Sciatic nerve (tissue), 2 donors: ENCODE measurements at regions of chr16 and their contacts with region 1.

Region 1: DNA sequence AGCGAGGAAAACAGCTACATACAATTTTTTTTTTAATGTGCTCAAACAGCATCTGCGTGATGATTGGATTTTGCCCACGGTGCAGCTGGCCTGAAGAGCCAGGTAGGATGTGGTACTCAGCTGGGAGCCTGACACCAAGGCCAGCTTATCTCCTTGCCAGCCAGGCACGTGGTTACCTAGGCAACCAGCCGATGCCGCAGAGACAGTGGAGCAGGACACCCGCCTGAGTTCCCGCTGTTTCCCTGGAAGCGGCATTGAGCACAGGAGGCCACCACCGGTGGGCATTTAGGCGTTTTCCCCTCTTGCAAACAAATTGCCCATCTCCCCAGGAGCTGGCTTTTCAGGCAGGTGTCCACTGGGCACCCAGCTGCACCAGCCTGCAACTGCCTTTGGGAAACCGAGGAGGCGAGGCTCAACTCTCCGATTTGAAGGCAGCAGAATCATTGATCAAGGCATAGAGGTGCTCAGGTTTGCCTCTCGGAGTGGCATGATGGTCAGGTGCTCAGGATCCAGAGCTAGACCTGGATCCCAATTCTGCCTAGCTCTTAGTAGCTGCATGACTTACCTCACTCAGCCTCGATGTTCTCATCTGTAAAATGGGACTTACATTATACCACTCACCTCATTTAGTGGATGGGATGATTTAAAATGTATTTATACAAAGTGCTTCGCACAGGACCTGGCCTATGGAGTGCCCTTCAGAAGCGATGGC is 137.5 kb upstream of the PLCG2 start:
- DNase-seq: no peak
- ATAC-seq: no peak

Region 2: GRCh38 chr16:81606039-81606438 is 35.5 kb before region 1 on chr16:
- intact Hi-C with region 1: loop called (anchors 1 kb)
- DNase-seq: no peak
- ATAC-seq: no peak

Region 3: DNA sequence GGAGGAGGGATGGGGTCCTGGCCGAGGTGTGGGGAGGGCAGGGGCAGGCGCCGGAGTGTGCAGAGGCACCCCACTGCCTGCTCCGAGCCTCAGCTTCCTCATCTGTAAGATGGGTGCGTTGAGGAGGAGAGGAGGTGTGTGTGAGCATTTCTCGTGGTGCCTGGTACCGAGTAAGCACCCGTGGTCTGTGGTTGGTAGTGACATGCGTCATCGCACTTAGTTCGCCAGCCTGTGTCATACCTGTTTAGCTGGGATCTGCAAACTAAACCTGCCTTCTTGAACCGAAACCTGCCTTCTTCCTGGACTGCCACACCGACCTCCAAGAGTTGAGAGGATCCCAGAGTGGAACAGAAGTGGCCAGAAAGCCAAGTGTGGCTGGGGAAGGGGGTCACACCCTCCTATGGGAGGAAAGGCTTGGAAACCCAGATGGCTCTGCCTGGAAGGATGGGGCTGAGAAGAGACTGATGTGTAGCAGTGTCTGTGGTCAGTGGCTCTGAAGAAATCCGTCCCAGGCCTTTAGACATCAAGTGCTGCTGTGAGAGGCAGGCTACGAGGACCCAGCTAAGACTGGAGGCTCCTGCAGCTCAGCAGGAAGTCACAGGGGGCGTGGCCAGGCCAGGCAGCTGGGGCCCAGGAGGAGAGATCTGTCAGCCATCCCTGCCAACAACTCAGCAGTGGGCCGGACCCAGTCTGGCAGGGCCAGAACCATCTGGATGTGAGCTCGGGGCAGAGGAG is 25.1 kb before region 1 on chr16:
- intact Hi-C with region 1: no loop called
- DNase-seq: no peak
- ATAC-seq: peak; percentile 63